ENCODE measurements at regions of chr14 and their contacts with region 1.

Region 1: DNA sequence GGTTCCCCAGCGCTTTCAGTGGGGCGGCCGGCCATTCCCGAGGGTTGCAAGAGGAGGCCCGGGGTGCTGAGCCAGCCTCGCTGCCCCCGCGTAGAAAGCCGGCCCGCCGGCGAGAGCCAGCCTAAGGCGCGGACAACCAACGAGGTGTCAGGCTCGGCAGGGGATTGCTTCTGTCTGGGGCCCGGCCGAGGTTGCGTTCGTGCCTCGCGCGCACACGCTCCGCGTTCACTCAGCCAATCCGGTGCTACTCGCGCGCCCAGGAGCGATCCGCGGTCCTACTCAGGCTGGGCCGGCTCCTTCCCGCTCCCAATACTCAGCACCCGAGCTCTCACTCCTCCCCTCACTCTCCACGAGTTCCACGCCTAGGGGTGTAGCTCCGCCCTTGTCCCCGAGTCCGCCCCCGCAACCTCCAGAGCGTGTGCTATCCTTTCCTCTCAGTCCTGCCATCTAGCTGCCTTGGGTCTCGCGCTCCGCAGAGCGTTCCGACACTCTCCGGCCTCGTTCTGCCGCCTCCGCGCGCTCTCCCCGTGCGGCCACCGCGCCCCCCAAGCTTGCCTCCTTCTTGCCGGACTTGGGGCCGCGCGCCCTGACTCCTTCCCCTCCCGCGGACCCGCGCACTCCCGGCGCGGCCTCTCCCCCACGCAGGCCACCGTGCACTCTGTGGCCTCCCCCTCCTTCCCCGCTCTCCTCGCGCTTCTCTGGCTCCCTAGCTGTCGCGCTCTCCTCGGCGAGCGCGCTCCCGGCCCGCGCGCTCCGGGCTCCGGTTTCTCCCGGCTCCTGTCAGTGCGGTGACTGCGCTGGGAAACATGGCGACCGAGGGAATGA is at the start of gene GPHN:
- DNase-seq: peak; percentile 71 to 95 (median 82)
- ATAC-seq: peak; percentile 89
- H3K4me3 ChIP-seq: peak within 1 kb of the TSS; percentile 90
- H3K4me3 Mint-ChIP-seq: peak within 1 kb of the TSS; percentile 99
- H3K27ac ChIP-seq: peak within 1 kb of the TSS; percentile 14 to 48
- H3K27ac Mint-ChIP-seq: peak within 1 kb of the TSS; percentile 94
- H3K4me1 ChIP-seq: peaks cover 19% of the 10 kb centered on the region
- H3K4me1 Mint-ChIP-seq: peaks cover 41% of the 10 kb centered on the region
- H3K27me3 ChIP-seq: no peaks in the 10 kb centered on the region
- H3K27me3 Mint-ChIP-seq: no peaks in the 10 kb centered on the region
- CTCF ChIP-seq: no peak
- total RNA-seq, gene GPHN: 10.0 to 10.7 TPM

Region 2: DNA sequence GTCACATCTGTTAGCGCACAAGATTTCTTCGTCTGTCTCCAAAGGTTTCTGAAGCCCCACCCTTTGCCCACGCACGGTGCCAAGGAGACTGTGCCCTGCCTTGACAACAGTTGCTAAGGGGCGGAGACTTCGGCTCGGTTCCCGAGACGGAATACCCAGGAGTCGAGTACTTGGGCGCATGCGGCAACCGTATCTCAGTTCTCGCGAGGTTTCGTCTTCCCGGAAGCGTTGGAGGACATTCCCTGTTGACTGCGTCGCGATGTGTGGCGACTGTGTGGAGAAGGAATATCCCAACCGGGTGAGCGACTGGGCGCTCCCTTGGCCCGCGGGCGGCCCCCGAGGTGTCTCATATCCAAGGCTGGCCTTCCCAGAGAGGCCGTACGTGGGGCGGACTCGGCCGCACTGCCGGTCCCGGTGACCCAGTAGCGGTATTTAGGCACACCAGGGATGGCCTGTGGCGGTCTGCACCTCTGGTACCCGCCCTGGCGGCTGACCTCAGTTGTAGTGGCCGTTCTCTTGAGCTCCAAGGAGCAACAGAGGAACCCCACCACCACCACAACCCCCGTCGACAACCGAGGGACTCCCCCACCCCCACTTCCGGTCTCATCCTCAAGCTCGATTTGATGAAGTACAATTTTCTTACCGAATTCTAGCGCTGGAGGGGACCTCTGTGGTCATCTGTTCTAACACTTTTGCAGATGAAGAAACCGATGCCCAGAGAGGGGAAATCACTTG is 1593.5 kb before region 1 on chr14 and contains the start of gene CHURC1:
- CTCF ChIA-PET with region 1: no interaction called
- POLR2A ChIA-PET with region 1: no interaction called
- intact Hi-C with region 1: loop called in 1 of 2 experiments (anchors 10 kb)
- DNase-seq: peak; percentile 94 to 99 (median 96)
- ATAC-seq: peak; percentile 95
- H3K4me3 ChIP-seq: peak within 1 kb of the TSS; percentile 86
- H3K4me3 Mint-ChIP-seq: peak within 1 kb of the TSS; percentile 93
- H3K27ac ChIP-seq: peak within 1 kb of the TSS; percentile 99
- H3K27ac Mint-ChIP-seq: peak within 1 kb of the TSS; percentile 88
- H3K4me1 ChIP-seq: peaks cover 34% of the 10 kb centered on the region
- H3K4me1 Mint-ChIP-seq: peaks cover 57% of the 10 kb centered on the region
- H3K27me3 ChIP-seq: peaks cover 0 to under 1% of the 10 kb centered on the region in 2 experiments
- H3K27me3 Mint-ChIP-seq: no peaks in the 10 kb centered on the region
- CTCF ChIP-seq: no peak
- total RNA-seq, gene CHURC1: 50.1 to 54.0 TPM

Region 3: DNA sequence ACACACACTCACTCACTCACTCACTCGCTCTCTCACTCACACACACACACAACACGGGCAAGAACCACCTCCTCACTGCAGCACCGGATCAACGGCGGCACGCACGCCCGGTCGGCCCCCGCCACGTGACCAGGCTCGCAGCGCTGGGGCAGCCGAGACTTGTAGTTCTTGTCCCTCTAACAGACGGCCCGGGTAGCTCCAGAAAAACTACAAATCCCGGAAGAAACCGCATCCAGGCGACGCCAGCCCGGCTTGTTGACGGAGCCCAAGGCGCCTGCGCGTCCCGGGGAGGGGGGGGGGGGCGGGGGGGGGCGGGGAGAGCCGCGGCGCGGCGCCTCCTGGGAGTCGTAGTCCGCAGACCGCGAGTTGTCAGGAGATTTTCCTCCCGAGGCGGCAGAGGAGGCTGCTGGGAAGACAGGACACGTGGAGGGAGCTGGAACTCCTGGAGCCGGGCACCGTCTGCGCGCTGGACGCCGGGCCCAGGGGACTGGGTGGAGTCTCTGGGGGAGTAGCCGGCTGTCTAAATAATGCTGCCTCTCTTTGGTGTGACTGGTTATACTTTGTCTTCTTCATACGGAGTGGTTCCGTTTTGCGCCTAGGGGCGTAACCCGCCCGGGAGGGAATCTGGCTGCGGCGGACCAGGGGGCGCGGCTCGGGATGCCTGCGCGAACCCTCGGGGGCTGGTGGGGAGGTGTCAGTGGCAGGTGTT is 1405.3 kb before region 1 on chr14 and contains the start of gene MAX:
- CTCF ChIA-PET with region 1: no interaction called
- POLR2A ChIA-PET with region 1: no interaction called
- intact Hi-C with region 1: loop called in 1 of 2 experiments (anchors 5 kb)
- DNase-seq: peak; percentile 96 to 100 (median 98)
- ATAC-seq: peak; percentile 89
- H3K4me3 ChIP-seq: peak within 1 kb of the TSS; percentile 98
- H3K4me3 Mint-ChIP-seq: peak within 1 kb of the TSS; percentile 91
- H3K27ac ChIP-seq: peak within 1 kb of the TSS; percentile 98 to 100
- H3K27ac Mint-ChIP-seq: peak within 1 kb of the TSS; percentile 90
- H3K4me1 ChIP-seq: peaks cover 21% of the 10 kb centered on the region
- H3K4me1 Mint-ChIP-seq: peaks cover 44% of the 10 kb centered on the region
- H3K27me3 ChIP-seq: no peaks in the 10 kb centered on the region
- H3K27me3 Mint-ChIP-seq: peaks cover 4% of the 10 kb centered on the region
- CTCF ChIP-seq: no peak
- total RNA-seq, gene MAX: 159 to 171 TPM

Region 4: GRCh38 chr14:67240978-67241414 is 733.1 kb after region 1 on chr14:
- CTCF ChIA-PET with region 1: no interaction called
- POLR2A ChIA-PET with region 1: interaction called, 6 read pairs
- intact Hi-C with region 1: loop called in 1 of 2 experiments (anchors 5 kb)
- DNase-seq: peak; percentile 82 to 96 (median 90)
- ATAC-seq: peak; percentile 92
- H3K4me3 ChIP-seq: peak overlapping the region; percentile 77
- H3K4me3 Mint-ChIP-seq: peak overlapping the region; percentile 94
- H3K27ac ChIP-seq: peak overlapping the region in 1 of 2 donors; percentile 67
- H3K27ac Mint-ChIP-seq: peak overlapping the region; percentile 80
- H3K4me1 ChIP-seq: peaks cover 10% of the 10 kb centered on the region
- H3K4me1 Mint-ChIP-seq: peaks cover 24% of the 10 kb centered on the region
- H3K27me3 ChIP-seq: no peaks in the 10 kb centered on the region
- H3K27me3 Mint-ChIP-seq: no peaks in the 10 kb centered on the region
- CTCF ChIP-seq: no peak

Measured in CD4-positive, alpha-beta T cell (primary cell).